ENCODE measurements at regions of chr9 and their contacts with region 1.

Region 1: DNA sequence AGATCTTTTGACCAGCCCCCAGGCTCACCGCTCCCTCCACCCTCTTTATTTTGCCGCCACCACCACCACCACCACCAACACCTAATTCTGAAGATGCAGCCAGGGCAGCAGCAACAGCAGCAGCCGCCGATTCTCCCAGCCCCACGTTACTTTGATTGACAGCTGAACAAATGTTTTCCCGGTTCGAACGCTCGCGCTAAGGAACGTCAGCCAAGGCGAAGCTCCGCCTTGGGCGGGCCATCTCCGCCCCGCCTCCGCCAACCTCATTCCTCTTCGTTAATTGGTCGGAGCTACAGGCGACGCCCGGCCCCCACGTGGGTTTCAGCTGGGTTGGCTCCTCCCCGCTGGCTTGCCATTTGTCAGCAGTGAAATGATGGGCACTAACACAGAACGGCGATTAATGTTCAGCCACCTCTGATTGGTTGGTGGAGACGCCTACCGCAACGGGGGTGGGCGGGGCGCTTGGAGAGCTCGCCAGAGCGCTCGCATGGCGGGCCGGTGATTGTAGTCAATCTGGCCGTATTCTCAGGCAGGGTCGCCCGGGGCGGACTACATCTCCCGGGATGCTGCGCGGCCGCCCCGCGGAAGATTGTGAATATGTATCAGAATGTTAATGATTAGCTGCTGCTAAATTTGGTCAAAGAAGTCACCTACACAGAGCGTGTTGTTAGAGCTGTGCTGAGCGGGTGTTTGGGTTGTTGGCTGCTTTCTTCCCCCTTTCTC is at the start of gene TLE4:
- DNase-seq: peak; percentile 94
- ATAC-seq: peak; percentile 84
- H3K4me3 Mint-ChIP-seq: peak within 1 kb of the TSS; percentile 90
- H3K27ac Mint-ChIP-seq: peak within 1 kb of the TSS; percentile 46
- H3K4me1 Mint-ChIP-seq: peaks cover 38% of the 10 kb centered on the region
- H3K27me3 Mint-ChIP-seq: no peaks in the 10 kb centered on the region
- CTCF ChIP-seq: no peak
- total RNA-seq, gene TLE4: 62.6 and 63.9 TPM in 2 replicates

Region 2: GRCh38 chr9:78601957-78602565 is 969.4 kb before region 1 on chr9:
- CTCF ChIA-PET with region 1: no interaction called
- POLR2A ChIA-PET with region 1: interaction called, 3 read pairs
- intact Hi-C with region 1: loop called (anchors 5 kb)
- DNase-seq: no peak
- ATAC-seq: no peak
- H3K4me3 Mint-ChIP-seq: no peak overlapping the region
- H3K27ac Mint-ChIP-seq: no peak overlapping the region
- H3K4me1 Mint-ChIP-seq: no peaks in the 10 kb centered on the region
- H3K27me3 Mint-ChIP-seq: peaks cover 8% of the 10 kb centered on the region
- CTCF ChIP-seq: no peak

Region 3: GRCh38 chr9:79542735-79543620 is 28.5 kb before region 1 on chr9:
- CTCF ChIA-PET with region 1: no interaction called
- POLR2A ChIA-PET with region 1: no interaction called
- intact Hi-C with region 1: no loop called
- DNase-seq: no peak
- ATAC-seq: no peak
- H3K4me3 Mint-ChIP-seq: no peak overlapping the region
- H3K27ac Mint-ChIP-seq: no peak overlapping the region
- H3K4me1 Mint-ChIP-seq: peaks cover 4% of the 10 kb centered on the region
- H3K27me3 Mint-ChIP-seq: peaks cover 13% of the 10 kb centered on the region
- CTCF ChIP-seq: no peak

Region 4: GRCh38 chr9:79610791-79611614 is 39.5 kb after region 1 on chr9:
- CTCF ChIA-PET with region 1: no interaction called
- POLR2A ChIA-PET with region 1: interaction called, 5 read pairs
- intact Hi-C with region 1: loop called (anchors 1 kb)
- DNase-seq: no peak
- ATAC-seq: peak; percentile 83
- H3K4me3 Mint-ChIP-seq: no peak overlapping the region
- H3K27ac Mint-ChIP-seq: peak overlapping the region; percentile 53
- H3K4me1 Mint-ChIP-seq: peaks cover 57% of the 10 kb centered on the region
- H3K27me3 Mint-ChIP-seq: no peaks in the 10 kb centered on the region
- CTCF ChIP-seq: no peak

Region 5: DNA sequence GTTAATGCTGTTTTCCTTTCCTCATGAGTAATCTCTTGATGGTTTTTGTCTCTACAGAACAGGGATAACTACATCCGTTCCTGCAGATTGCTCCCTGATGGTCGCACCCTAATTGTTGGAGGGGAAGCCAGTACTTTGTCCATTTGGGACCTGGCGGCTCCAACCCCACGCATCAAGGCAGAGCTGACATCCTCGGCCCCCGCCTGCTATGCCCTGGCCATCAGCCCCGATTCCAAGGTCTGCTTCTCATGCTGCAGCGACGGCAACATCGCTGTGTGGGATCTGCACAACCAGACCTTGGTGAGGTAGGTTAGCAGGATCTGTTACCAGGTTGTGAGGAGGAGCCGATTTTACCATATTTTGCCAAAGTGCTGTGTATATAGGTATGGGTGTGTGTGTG is 148.5 kb after region 1 on chr9:
- CTCF ChIA-PET with region 1: no interaction called
- POLR2A ChIA-PET with region 1: no interaction called
- intact Hi-C with region 1: no loop called
- DNase-seq: no peak
- ATAC-seq: no peak
- H3K4me3 Mint-ChIP-seq: no peak overlapping the region
- H3K27ac Mint-ChIP-seq: no peak overlapping the region
- H3K4me1 Mint-ChIP-seq: no peaks in the 10 kb centered on the region
- H3K27me3 Mint-ChIP-seq: no peaks in the 10 kb centered on the region
- CTCF ChIP-seq: no peak

Region 6: GRCh38 chr9:79877943-79878602 is 306.6 kb after region 1 on chr9:
- CTCF ChIA-PET with region 1: no interaction called
- POLR2A ChIA-PET with region 1: interaction called, 14 read pairs
- intact Hi-C with region 1: loop called (anchors 1 kb)
- DNase-seq: no peak
- ATAC-seq: peak; percentile 82
- H3K4me3 Mint-ChIP-seq: peak overlapping the region; percentile 13
- H3K27ac Mint-ChIP-seq: peak overlapping the region; percentile 13
- H3K4me1 Mint-ChIP-seq: peaks cover 51% of the 10 kb centered on the region
- H3K27me3 Mint-ChIP-seq: no peaks in the 10 kb centered on the region
- CTCF ChIP-seq: no peak

Region 7: DNA sequence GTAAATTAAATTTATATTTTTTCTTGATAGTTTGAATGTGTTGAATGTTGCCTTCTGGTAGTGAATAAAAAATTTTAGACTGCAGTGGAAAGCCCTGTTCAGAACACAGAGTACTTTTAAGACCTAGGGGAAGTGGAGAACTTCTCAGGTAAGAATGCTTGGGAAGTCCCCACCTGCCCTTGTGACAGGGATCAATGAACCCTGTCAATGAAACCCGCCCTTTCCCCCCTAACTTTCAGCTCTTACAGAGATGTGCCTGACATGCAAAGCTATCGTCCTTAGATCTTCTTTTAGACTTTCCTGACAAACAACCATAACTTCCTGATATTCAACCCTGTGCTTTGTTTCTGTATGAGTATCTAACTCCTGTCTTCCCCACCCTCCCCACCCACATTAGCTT is 563.0 kb after region 1 on chr9:
- CTCF ChIA-PET with region 1: no interaction called
- POLR2A ChIA-PET with region 1: interaction called, 11 read pairs
- intact Hi-C with region 1: loop called (anchors 2 kb)
- DNase-seq: no peak
- ATAC-seq: peak; percentile 98
- H3K4me3 Mint-ChIP-seq: peak overlapping the region; percentile 61
- H3K27ac Mint-ChIP-seq: peak overlapping the region; percentile 79
- H3K4me1 Mint-ChIP-seq: peaks cover 42% of the 10 kb centered on the region
- H3K27me3 Mint-ChIP-seq: no peaks in the 10 kb centered on the region
- CTCF ChIP-seq: no peak

Measured in activated B cell treated with CpG ODN at 0.5 μM for 24 hours (primary cell).